Calu3 (cell line): ENCODE measurements at regions of chr15 and their contacts with region 1.

Region 1: GRCh38 chr15:52256366-52256765 is 39.2 kb downstream of the MYO5C start:
- DNase-seq: peak; percentile 73
- H3K4me3 Mint-ChIP-seq: no peak overlapping the region
- H3K27ac Mint-ChIP-seq: peak overlapping the region; percentile 72
- H3K4me1 Mint-ChIP-seq: peaks cover 43% of the 10 kb centered on the region
- H3K27me3 Mint-ChIP-seq: no peaks in the 10 kb centered on the region
- CTCF ChIP-seq: peak; percentile 66

Region 2: DNA sequence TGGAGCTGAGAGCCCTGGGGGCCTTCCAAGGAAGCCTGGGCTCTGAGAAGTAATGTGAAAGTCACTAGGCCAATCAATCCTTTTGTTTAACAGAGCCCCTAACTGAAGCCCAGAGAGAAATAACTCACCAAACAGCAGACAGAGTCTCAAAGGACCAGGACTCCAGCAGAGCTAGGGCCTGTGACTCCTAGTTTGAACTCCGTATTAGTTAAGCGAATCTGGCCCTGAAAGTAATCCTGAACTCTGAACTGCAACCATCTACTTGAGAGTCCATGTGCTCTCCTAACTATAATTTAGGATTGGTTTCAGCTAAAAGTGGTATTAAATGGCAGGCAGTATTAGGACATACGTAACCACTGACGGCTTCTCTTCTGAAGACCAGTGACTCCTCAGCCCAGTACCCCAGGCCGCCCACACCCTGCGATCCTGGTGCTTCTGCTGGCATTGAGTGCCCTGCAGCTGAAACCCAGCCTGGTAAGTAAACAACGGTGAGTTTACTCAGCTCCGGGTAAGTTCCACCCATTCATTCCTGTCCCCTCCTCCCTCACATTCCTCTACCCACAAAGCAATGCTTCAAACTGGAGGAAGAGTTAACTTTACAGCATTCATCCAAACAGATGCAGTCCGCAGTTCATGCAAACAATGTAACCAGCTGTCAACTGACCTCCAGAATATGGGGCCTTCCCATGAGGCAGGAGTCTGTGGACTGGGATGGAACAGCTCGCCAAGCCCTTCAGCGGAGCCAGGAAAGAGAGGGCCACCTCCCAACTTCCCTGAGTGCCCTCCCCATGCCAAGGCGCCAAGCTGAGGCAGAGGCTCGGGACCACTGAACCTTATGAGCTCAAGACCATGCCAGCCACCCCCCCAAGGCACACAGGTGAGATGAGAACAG is 31.9 kb after region 1 on chr15:
- CTCF ChIA-PET with region 1: interaction called, 10 read pairs
- intact Hi-C with region 1: loop called (anchors 2 kb)
- DNase-seq: peak; percentile 82
- H3K4me3 Mint-ChIP-seq: peak overlapping the region; percentile 55
- H3K27ac Mint-ChIP-seq: peak overlapping the region; percentile 81
- H3K4me1 Mint-ChIP-seq: peaks cover 47% of the 10 kb centered on the region
- H3K27me3 Mint-ChIP-seq: no peaks in the 10 kb centered on the region
- CTCF ChIP-seq: no peak

Region 3: GRCh38 chr15:52337198-52337853 is 81.0 kb after region 1 on chr15:
- CTCF ChIA-PET with region 1: interaction called, 9 read pairs
- intact Hi-C with region 1: loop called (anchors 2 kb)
- DNase-seq: no peak
- H3K4me3 Mint-ChIP-seq: no peak overlapping the region
- H3K27ac Mint-ChIP-seq: peak overlapping the region; percentile 37
- H3K4me1 Mint-ChIP-seq: peaks cover 23% of the 10 kb centered on the region
- H3K27me3 Mint-ChIP-seq: no peaks in the 10 kb centered on the region
- CTCF ChIP-seq: no peak

Region 4: DNA sequence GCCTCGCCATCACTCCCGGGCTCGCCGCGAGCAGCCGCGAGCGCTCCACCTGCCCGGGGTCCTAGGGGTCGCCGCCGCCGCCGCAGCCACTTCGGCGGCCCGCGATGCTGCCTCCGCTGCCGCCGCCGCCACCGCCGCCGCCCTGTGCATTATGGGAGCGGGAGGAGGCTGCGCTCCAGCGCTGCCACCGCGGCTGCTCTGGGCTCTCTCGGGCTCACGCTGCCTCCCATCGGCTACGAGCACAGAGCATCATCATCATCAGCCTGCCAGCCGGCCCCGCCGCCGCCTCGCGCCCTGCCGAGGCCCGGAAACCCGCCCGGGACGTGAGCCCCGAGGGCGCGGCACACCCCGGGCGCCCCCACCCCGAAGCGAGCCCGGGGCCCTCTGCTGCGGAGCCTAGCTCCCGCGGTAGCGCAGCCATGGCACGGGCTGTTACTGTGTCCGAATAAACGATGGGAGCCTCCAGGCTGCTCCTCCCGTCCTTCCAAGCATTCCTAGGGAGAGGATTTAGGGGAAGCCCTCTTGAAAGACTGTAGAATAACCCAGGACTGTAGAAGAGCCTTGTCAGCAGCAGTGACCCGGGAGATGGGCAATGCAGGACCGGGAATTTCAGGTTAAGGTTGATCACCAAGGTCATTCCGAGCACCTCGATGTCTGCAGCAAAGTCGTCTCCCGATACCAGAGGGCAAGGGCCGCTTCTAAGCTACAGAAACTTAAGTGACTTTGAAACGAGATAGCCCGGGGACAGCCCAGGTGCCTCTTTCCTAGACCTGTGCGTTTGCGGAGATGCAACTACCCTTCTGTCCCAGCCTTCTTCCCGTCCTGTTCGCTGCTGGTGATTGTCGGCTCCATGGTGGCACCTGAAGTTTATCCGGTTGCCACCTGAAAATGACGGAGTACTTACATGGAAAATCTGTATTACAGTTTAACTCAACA is 272.9 kb after region 1 on chr15:
- CTCF ChIA-PET with region 1: no interaction called
- intact Hi-C with region 1: loop called (anchors 10 kb)
- DNase-seq: peak; percentile 57
- H3K4me3 Mint-ChIP-seq: peak overlapping the region; percentile 61
- H3K27ac Mint-ChIP-seq: no peak overlapping the region
- H3K4me1 Mint-ChIP-seq: peaks cover 9% of the 10 kb centered on the region
- H3K27me3 Mint-ChIP-seq: peaks cover 50% of the 10 kb centered on the region
- CTCF ChIP-seq: no peak

Region 5: GRCh38 chr15:52568601-52569256 is 312.4 kb after region 1 on chr15 and contains the start of gene ARPP19:
- CTCF ChIA-PET with region 1: interaction called, 3 read pairs
- intact Hi-C with region 1: loop called (anchors 10 kb)
- DNase-seq: peak; percentile 91
- H3K4me3 Mint-ChIP-seq: peak within 1 kb of the TSS; percentile 65
- H3K27ac Mint-ChIP-seq: peak within 1 kb of the TSS; percentile 92
- H3K4me1 Mint-ChIP-seq: peaks cover 9% of the 10 kb centered on the region
- H3K27me3 Mint-ChIP-seq: no peaks in the 10 kb centered on the region
- CTCF ChIP-seq: no peak
- total RNA-seq, gene ARPP19: 145 and 155 TPM in 2 replicates

Region 6: DNA sequence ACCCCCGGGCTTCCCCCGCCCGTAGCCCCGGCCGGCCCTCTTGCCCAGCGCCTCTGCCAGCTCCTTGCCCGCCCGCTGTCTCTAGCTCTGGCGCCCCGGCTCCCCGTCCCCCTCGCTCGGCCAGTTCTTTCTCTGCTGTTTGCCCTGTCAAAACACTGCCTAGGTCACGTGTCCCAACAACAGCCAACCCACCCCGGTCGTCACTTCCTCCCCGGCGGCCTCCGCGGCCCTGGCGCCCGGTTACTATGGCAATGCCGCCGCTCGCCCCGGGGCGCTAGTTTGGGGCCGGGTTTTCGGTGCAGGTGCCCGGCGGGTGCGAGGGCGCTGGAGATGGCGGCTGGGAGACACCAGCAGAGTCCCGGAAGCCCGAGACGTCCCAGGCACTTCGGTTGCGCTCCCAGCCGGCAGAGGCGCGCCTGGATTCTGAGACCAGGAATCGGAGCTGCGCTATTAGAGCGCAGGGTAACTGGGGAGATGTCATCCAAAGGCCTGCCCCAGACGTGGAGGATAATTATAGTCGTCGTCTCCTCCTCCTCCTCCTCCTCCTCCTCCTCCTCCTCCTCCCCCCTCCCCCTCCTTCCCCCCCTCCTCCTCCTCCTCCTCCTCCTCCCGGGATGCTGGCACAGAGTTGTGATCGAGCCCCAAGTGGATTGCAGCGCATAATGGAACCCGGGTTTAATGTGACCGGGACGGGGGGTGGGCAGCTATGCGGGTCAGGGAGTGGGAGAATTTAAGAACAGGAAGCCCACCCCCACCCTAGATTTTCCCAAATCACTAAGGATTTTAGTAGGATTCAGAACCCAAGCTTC is 423.1 kb after region 1 on chr15 and contains the start of gene ATOSA:
- CTCF ChIA-PET with region 1: no interaction called
- intact Hi-C with region 1: loop called (anchors 10 kb)
- DNase-seq: peak; percentile 90
- H3K4me3 Mint-ChIP-seq: peak within 1 kb of the TSS; percentile 100
- H3K27ac Mint-ChIP-seq: peak within 1 kb of the TSS; percentile 95
- H3K4me1 Mint-ChIP-seq: peaks cover 17% of the 10 kb centered on the region
- H3K27me3 Mint-ChIP-seq: no peaks in the 10 kb centered on the region
- CTCF ChIP-seq: no peak
- total RNA-seq, gene ATOSA: 21.8 and 22.2 TPM in 2 replicates

Region 7: GRCh38 chr15:52735231-52736089 is 479.1 kb after region 1 on chr15:
- CTCF ChIA-PET with region 1: interaction called, 8 read pairs
- intact Hi-C with region 1: loop called (anchors 1 kb)
- DNase-seq: peak; percentile 78
- H3K4me3 Mint-ChIP-seq: no peak overlapping the region
- H3K27ac Mint-ChIP-seq: no peak overlapping the region
- H3K4me1 Mint-ChIP-seq: peaks cover 2% of the 10 kb centered on the region
- H3K27me3 Mint-ChIP-seq: no peaks in the 10 kb centered on the region
- CTCF ChIP-seq: no peak